HEK293 (cell line): ENCODE measurements at regions of chr22 and their contacts with region 1.

Region 1: DNA sequence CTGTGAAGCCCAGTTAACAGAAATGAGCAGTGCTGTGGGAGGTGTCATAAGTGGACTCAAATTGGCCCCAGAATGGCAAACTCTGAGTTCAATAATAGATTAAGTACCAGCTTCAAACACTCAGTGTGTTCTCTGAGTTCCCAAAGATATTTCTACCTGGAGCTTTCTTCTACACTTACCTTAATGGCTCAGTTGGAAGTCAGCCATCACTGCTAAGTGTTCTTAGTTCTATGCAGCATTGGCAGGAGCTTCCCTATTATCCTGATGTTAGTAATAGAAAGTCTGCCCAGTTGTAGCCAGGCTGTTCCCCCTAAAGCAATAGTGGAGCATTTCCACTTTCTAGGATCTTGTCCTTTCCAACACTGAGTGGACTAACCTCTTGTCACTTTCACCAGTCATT is 9.7 kb upstream of the PIK3IP1 start:
- H3K4me3 ChIP-seq: no peak overlapping the region
- H3K27ac ChIP-seq: no peak overlapping the region
- H3K4me1 ChIP-seq: no peaks in the 10 kb centered on the region
- CTCF ChIP-seq: no peak

Region 2: DNA sequence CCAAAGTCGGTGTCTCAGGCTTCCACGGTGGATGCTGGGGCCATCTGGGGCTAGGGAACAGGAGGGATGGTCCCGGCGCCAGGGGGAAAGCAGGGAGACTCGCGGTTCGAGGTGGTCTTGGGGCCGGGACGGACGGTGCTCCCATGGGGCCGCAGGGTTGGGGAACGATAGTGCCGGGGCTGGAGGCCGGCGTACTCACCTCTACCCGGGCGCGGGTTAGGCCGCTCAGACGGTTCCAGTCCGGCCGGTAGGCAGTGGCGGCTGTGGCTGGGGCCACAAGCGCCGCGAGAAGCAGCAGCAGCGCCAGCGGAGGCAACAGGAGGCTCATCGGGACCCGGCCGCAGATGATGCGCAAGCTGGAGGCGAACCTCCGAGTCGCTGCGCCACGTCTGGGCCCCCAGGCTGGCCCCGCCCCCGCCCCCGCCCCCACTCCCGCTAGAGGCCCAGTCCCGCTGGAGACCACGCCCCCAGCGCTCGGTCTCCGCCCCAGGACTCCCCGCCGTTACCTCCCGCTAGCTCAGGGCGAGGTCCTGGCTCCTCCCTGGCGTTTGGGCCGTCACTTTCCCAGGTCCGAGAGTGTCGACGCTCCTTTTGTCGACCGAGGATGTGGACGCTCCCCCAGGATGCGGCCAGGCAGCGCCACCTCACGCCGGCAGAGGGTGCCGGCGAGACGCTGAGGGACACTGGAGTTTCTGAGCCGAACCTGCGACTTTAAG is 194.7 kb before region 1 on chr22 and contains the start of gene SELENOM:
- CTCF ChIA-PET with region 1: no interaction called
- POLR2A ChIA-PET with region 1: no interaction called
- H3K4me3 ChIP-seq: peak within 1 kb of the TSS; percentile 39
- H3K27ac ChIP-seq: peak within 1 kb of the TSS; percentile 40; the same call in 1 of the 2 replicates
- H3K4me1 ChIP-seq: peaks cover 4% of the 10 kb centered on the region; the same call in 1 of the 2 replicates
- CTCF ChIP-seq: peak; percentile 95

Region 3: DNA sequence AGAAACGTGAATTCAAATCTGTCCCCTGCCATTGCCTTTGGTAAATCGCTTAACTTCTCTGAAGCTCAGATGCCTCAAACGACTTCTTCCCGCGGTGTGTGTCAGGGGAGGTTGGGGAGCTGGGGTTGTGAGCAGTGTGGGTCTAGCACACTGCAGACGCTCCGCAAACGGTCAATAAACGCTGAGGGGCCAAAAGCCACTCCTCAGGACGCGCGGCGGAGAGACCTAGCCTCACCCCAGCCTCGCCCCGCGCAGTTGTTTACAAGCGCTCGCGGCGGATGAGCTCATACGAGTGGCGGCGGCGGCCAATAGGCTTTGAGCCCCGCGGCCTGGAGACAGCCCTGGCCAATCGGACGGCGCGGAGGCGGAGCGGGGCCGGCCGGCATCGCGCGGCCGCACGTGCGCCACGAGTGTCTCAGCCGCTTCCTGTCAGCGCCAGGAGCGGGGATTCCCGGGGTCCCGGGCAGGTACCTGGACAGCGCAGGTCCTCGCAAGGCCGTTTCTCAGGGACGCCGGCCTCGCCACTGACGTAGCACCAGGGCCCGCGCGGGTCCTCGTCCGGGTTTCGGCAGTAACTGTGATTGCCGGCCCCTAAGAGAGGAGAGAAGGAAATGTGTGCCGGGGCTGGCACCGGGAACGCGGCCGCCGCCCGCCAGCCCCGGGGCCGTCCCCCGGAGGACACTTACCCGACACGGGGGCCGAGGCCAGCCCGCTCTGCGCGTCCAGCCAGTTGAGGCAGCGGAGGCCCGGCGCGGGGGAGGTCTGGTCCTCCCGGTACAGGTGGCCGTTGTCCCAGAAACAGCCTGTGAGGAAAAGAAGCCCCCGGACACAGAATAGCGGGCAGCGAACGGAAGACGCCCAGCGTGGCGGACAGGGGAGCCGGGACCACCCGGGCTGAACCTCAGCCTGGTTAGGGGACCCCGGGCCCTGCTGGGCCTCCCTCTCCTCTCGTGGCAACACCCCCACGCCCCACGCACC is 11.2 kb before region 1 on chr22:
- CTCF ChIA-PET with region 1: interaction called, 26 read pairs
- POLR2A ChIA-PET with region 1: interaction called, 6 read pairs
- H3K4me3 ChIP-seq: peak overlapping the region; percentile 50
- H3K27ac ChIP-seq: peak overlapping the region; percentile 54; the same call in 1 of the 2 replicates
- H3K4me1 ChIP-seq: peaks cover 11% of the 10 kb centered on the region; the same call in 1 of the 2 replicates
- CTCF ChIP-seq: no peak

Region 4: DNA sequence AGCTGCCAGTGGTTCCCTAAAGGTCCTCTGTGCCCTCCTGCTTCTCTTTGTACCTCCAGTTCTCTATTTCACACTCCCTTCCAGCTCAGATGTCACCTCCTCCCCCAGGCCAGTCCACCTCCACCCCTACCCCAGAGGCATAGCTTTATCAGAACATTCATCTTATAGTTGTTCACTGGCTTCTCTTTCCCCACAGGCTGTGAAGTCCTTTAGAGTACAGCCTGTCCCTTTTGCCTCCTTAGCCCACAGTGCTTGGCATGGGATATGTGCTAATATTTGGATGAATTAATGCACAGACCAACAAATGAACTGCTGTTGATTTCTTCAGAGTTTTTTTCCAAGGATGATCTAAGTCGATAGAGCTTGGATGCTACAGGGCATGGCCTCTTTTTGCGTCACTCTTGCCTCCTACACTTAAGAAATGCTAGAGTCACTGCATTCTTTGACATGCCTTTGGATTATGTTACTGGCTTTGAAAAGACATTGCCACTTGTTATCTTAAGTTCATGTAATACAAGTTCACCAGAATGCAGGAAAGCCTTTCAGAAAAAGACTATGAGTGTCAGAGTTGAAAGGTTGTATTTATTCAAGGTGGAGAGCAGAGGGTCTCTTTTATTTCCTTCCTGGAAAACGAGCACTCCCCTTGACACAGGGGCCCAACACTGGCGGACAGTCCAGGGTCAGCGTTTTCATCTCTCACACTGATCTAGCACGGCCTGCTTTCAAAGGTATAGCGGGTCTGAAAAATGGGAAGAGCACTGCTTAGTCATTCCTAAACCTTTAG is 284.3 kb after region 1 on chr22:
- CTCF ChIA-PET with region 1: no interaction called
- POLR2A ChIA-PET with region 1: no interaction called
- H3K4me3 ChIP-seq: no peak overlapping the region
- H3K27ac ChIP-seq: no peak overlapping the region
- H3K4me1 ChIP-seq: no peaks in the 10 kb centered on the region
- CTCF ChIP-seq: no peak